ENCODE measurements at regions of chr15 and their contacts with region 1.

Region 1: DNA sequence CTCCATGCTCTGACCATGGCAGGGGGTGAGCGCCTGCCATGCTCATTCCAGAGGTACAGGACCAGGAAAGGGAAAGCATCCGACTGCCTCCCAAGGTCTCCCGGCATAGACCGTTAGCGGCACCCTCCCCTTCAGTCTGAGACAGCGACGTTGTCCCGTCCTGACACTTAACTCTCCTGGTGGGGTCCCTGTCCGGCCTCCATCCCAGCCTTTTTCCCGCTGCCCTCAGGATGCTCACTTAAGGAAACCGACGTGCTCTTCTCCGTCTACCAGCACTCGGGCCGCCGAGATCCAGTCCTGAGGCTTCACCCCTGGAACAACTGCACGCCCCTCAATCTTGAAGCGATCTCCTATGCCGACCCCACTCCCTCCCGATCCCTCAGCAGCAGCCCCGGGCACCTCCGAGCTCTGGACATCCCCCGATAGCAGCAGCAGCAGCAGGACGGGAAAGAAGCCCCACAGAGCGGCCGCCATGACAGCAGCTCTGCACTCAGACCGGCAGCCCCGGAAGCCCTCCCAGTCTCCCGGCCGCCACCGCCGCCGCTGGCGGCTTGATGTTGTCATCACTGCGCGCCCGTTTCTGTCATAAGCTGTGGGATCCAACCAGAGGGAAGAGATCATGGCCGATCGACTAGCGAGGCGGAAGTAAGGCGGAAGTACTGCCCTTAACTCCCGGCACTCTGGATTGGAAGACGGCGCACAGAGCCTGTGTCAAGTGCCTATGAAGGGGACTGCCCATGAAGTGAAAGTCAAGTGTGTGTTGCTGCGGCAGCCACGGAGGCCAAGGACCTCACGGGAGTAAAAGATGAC is at the starts of genes EMC7 and PGBD4:
- DNase-seq: peak; percentile 99
- ATAC-seq: peak; percentile 95 to 99 (median 98)
- H3K4me3 ChIP-seq: peak within 1 kb of the TSS; percentile 91
- H3K4me3 Mint-ChIP-seq: peak within 1 kb of the TSS; percentile 96
- H3K27ac ChIP-seq: peak within 1 kb of the TSS; percentile 96
- H3K27ac Mint-ChIP-seq: peak within 1 kb of the TSS; percentile 99 to 100
- H3K4me1 ChIP-seq: peaks cover 4% of the 10 kb centered on the region
- H3K4me1 Mint-ChIP-seq: peaks cover 35% of the 10 kb centered on the region in 2 donors
- H3K27me3 ChIP-seq: no peaks in the 10 kb centered on the region
- H3K27me3 Mint-ChIP-seq: no peaks in the 10 kb centered on the region
- CTCF ChIP-seq: no peak
- total RNA-seq, gene EMC7: 55.9 to 60.8 (median 59.6) TPM
- total RNA-seq, gene PGBD4: 3.2 to 4.2 (median 4.0) TPM

Region 2: GRCh38 chr15:33600212-33600611 is 501.4 kb before region 1 on chr15:
- intact Hi-C with region 1: no loop called
- DNase-seq: no peak
- ATAC-seq: no peak
- H3K4me3 ChIP-seq: no peak overlapping the region
- H3K4me3 Mint-ChIP-seq: no peak overlapping the region
- H3K27ac ChIP-seq: no peak overlapping the region
- H3K27ac Mint-ChIP-seq: no peak overlapping the region
- H3K4me1 ChIP-seq: no peaks in the 10 kb centered on the region
- H3K4me1 Mint-ChIP-seq: no peaks in the 10 kb centered on the region
- H3K27me3 ChIP-seq: no peaks in the 10 kb centered on the region
- H3K27me3 Mint-ChIP-seq: no peaks in the 10 kb centered on the region
- CTCF ChIP-seq: no peak

Region 3: DNA sequence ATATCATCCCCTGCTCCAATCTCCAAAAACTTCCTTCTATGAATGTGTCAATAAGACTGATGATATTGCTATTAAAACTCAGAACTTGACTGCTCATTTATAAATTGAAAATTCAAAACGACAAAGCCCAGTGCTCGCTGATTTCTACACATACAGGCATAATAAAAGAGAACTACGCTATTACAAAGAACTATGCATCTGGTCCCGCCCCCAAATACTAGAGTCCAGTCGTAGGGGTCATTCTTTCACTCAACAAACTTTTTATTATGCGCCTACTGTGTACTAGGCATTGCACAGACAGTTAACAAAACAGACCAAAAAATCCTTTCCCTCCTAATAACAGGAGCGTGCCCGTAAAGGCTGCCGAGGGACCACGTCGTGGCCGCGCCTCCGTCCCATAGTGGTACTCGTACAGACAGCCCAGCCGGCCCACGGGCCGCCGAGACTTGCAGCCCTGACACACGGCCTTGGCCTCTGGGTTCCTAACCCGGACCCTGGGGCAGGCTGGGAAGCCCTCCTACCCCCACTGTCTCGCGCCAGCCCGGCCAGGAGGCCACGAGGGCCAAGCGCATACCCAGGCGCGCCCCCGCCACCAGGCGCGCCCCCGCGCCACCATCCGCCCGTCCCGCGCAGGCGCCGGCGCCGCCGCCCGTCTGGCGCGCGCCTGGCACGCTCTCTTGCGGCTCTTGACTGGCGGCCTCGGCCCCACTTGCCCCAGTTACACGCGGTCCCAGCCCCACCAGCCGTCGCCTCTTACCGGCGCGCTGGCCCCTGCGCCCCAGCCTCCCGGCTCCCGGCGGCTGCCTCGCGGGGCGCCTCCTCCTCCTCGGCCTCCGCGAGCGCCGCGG is 63.3 kb before region 1 on chr15:
- intact Hi-C with region 1: loop called (anchors 2 kb)
- DNase-seq: peak; percentile 71 to 88
- ATAC-seq: peak; percentile 85 to 92 (median 89)
- H3K4me3 ChIP-seq: peak overlapping the region; percentile 71
- H3K4me3 Mint-ChIP-seq: peak overlapping the region; percentile 91
- H3K27ac ChIP-seq: peak overlapping the region; percentile 69
- H3K27ac Mint-ChIP-seq: peak overlapping the region; percentile 70 to 85
- H3K4me1 ChIP-seq: peaks cover 7% of the 10 kb centered on the region
- H3K4me1 Mint-ChIP-seq: peaks cover 18 to 19% of the 10 kb centered on the region in 2 donors
- H3K27me3 ChIP-seq: no peaks in the 10 kb centered on the region
- H3K27me3 Mint-ChIP-seq: no peaks in the 10 kb centered on the region
- CTCF ChIP-seq: no peak

Region 4: DNA sequence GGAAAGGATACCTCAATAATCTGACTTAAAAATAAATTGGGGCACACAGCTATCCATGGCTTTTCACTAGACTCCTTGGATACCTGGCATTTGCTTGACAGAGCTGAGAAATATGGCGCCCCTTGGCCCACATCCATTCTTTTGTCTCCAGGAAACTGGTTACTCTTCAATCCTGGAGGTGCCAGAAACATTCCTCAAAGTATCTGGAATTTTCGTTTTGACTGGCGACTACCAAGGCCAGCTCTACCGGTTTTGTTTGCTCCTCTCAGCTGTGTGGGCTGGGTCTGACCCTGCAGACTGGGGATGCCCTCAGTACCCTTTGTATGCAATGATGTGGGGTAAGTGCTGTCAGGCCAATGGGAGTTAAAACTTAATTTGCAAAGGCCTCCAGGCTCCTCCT is 81.4 kb after region 1 on chr15:
- intact Hi-C with region 1: no loop called
- DNase-seq: no peak
- ATAC-seq: no peak
- H3K4me3 ChIP-seq: no peak overlapping the region
- H3K4me3 Mint-ChIP-seq: no peak overlapping the region
- H3K27ac ChIP-seq: no peak overlapping the region
- H3K27ac Mint-ChIP-seq: no peak overlapping the region
- H3K4me1 ChIP-seq: no peaks in the 10 kb centered on the region
- H3K4me1 Mint-ChIP-seq: peaks cover 20 to 36% of the 10 kb centered on the region in 2 donors
- H3K27me3 ChIP-seq: no peaks in the 10 kb centered on the region
- H3K27me3 Mint-ChIP-seq: no peaks in the 10 kb centered on the region
- CTCF ChIP-seq: no peak

Region 5: DNA sequence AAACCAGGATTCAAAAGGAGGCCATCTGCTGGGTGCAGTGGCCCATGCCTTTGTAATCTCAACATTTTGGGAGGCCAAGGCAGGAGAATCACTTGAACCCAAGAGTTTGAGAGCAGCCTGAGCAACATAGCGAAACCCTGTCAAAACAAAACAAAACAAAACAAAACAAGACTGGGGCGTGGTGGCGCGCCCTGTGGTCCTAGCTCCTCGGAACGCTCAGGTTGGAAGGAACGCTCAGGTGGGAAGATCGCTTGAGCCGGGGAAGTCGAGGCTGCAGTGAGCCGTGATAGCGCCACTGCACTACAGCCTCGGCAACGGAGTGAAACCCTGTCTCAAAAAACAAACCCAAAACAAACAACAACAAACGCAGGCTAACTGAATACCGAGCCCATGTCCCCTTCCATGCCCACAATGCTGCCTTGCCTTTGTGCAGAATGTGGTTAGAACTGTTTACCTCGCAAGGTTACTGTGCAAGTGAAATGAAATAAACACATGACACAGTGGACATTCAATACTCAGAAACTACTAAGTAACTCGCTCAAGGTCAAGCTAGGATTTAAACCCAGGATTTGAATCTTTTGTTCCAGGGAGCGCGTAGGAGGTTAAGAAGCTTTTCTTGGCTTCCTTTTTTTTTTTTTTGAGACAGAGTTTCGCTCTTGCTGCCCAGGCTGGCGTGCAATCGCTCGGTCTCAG is 122.5 kb after region 1 on chr15:
- intact Hi-C with region 1: loop called (anchors 1 kb)
- DNase-seq: peak in 1 of 2 donors; percentile 31
- ATAC-seq: no peak
- H3K4me3 ChIP-seq: peak overlapping the region; percentile 67
- H3K4me3 Mint-ChIP-seq: peak overlapping the region; percentile 95
- H3K27ac ChIP-seq: peak overlapping the region; percentile 83
- H3K27ac Mint-ChIP-seq: peak overlapping the region; percentile 98 to 99
- H3K4me1 ChIP-seq: peaks cover 15% of the 10 kb centered on the region
- H3K4me1 Mint-ChIP-seq: peaks cover 23 to 29% of the 10 kb centered on the region in 2 donors
- H3K27me3 ChIP-seq: no peaks in the 10 kb centered on the region
- H3K27me3 Mint-ChIP-seq: no peaks in the 10 kb centered on the region
- CTCF ChIP-seq: no peak

Region 6: GRCh38 chr15:34337557-34338306 is 236.2 kb after region 1 on chr15 and contains the start of gene SLC12A6:
- intact Hi-C with region 1: loop called (anchors 5 kb)
- DNase-seq: peak; percentile 91 to 95
- ATAC-seq: peak; percentile 84 to 94 (median 91)
- H3K4me3 ChIP-seq: peak within 1 kb of the TSS; percentile 79
- H3K4me3 Mint-ChIP-seq: peak within 1 kb of the TSS; percentile 97
- H3K27ac ChIP-seq: peak within 1 kb of the TSS; percentile 76
- H3K27ac Mint-ChIP-seq: peak within 1 kb of the TSS; percentile 92 to 95
- H3K4me1 ChIP-seq: peaks cover 41% of the 10 kb centered on the region
- H3K4me1 Mint-ChIP-seq: peaks cover 47 to 52% of the 10 kb centered on the region in 2 donors
- H3K27me3 ChIP-seq: no peaks in the 10 kb centered on the region
- H3K27me3 Mint-ChIP-seq: no peaks in the 10 kb centered on the region
- CTCF ChIP-seq: no peak
- total RNA-seq, gene SLC12A6: 56.1 to 82.9 (median 79.5) TPM

Measured in natural killer cell (primary cell).